Activated B cell treated with CpG ODN at 0.5 μM for 24 hours (primary cell): ENCODE measurements at regions of chr3 and their contacts with region 1.

Region 1: DNA sequence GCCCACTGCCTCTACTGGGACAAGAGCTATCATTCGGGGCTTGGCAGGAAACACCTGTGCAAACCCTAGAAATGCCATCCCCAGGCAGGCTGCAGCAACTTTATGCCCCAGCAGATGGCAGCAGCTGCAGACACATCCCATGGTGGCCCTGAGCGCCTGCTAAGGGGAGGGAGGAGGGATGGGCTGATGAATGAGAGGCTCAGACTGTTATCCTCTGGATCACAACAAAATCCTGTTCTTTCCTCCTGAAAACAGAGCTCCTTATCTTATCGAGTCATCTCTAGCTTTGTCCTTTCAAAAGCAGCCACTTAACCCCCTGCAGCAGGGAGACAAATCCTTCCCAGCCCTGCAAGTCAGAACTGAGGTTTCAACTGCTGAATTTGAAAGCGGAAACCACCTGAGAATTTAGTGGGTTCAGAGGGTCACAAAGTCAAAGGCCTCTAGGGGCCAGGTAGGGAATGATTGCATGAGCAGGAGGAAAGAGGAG is 90.6 kb upstream of the PROK2 start:
- DNase-seq: peak; percentile 70
- ATAC-seq: peak; percentile 99
- H3K4me3 Mint-ChIP-seq: no peak overlapping the region
- H3K27ac Mint-ChIP-seq: no peak overlapping the region
- H3K4me1 Mint-ChIP-seq: peaks cover 13% of the 10 kb centered on the region
- H3K27me3 Mint-ChIP-seq: peaks cover 31% of the 10 kb centered on the region
- CTCF ChIP-seq: no peak

Region 2: GRCh38 chr3:70916375-70917065 is 959.0 kb before region 1 on chr3:
- CTCF ChIA-PET with region 1: no interaction called
- POLR2A ChIA-PET with region 1: no interaction called
- intact Hi-C with region 1: no loop called
- DNase-seq: no peak
- ATAC-seq: no peak
- H3K4me3 Mint-ChIP-seq: no peak overlapping the region
- H3K27ac Mint-ChIP-seq: no peak overlapping the region
- H3K4me1 Mint-ChIP-seq: no peaks in the 10 kb centered on the region
- H3K27me3 Mint-ChIP-seq: peaks cover 12% of the 10 kb centered on the region
- CTCF ChIP-seq: no peak

Region 3: GRCh38 chr3:71905426-71905825 is 29.9 kb after region 1 on chr3:
- CTCF ChIA-PET with region 1: no interaction called
- POLR2A ChIA-PET with region 1: no interaction called
- intact Hi-C with region 1: loop called (anchors 2 kb)
- DNase-seq: no peak
- ATAC-seq: peak; percentile 90
- H3K4me3 Mint-ChIP-seq: peak overlapping the region; percentile 52
- H3K27ac Mint-ChIP-seq: no peak overlapping the region
- H3K4me1 Mint-ChIP-seq: peaks cover 42% of the 10 kb centered on the region
- H3K27me3 Mint-ChIP-seq: peaks cover 73% of the 10 kb centered on the region
- CTCF ChIP-seq: no peak

Region 4: DNA sequence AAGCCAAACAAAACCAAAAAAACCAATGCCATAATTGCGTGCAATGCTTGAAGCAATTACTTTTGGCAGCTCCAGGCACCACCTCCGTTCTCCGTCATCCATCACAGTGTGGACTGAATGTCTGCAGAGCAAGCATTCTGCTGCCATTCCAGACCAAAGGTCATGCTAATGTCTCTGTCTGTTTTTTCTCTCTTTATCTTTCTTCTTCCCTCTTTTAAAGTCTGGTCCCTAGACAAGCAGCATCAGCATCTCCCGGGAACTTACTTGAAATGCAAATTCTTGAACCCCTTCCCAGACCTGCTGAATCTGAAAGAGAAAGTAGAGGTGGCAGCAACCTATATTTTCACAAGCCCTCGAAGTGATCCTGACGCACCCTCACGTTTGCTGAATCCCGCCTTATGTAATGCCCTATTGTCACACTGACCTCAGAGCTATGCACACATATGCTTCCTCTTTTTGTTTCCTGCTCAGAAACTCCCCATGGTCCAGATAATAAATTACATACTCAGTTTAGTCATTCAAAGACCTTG is 206.7 kb after region 1 on chr3:
- CTCF ChIA-PET with region 1: interaction called, 4 read pairs
- POLR2A ChIA-PET with region 1: no interaction called
- intact Hi-C with region 1: loop called (anchors 1 kb)
- DNase-seq: no peak
- ATAC-seq: peak; percentile 81
- H3K4me3 Mint-ChIP-seq: peak overlapping the region; percentile 72
- H3K27ac Mint-ChIP-seq: peak overlapping the region; percentile 71
- H3K4me1 Mint-ChIP-seq: peaks cover 71% of the 10 kb centered on the region
- H3K27me3 Mint-ChIP-seq: peaks cover 12% of the 10 kb centered on the region
- CTCF ChIP-seq: no peak

Region 5: DNA sequence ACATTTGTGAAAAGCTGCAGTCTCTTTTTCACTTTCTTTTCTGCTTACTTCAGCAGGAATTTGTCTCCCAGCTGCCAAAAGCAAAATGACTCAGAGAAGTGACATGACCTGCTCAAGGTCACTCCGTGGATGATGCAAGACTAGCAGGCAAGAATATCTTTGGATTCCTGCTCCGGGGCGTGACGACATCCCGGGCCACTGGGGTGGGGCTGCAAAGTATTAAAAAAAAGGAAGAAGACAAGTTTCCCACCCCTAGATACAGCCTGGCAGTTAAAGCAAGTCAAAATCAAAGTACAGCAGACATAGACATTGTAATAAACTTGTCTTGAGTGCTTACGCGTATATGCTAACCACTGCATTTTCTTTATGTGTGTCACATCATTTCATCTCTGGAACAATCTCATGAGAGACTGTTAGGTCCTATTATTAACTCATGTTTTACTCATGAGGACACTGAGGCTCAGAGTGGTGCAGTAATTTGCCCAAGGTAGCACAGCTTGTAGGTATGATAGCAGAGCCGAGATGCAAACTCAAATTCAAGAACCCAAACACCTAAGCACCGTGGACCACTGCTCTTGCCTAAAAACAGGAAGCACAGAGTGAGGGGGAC is 394.7 kb after region 1 on chr3:
- CTCF ChIA-PET with region 1: no interaction called
- POLR2A ChIA-PET with region 1: no interaction called
- intact Hi-C with region 1: loop called (anchors 10 kb)
- DNase-seq: no peak
- ATAC-seq: no peak
- H3K4me3 Mint-ChIP-seq: peak overlapping the region; percentile 38
- H3K27ac Mint-ChIP-seq: no peak overlapping the region
- H3K4me1 Mint-ChIP-seq: peaks cover 94% of the 10 kb centered on the region
- H3K27me3 Mint-ChIP-seq: no peaks in the 10 kb centered on the region
- CTCF ChIP-seq: no peak

Region 6: GRCh38 chr3:72818092-72818773 is 942.7 kb after region 1 on chr3:
- CTCF ChIA-PET with region 1: interaction called, 113 read pairs
- POLR2A ChIA-PET with region 1: interaction called, 3 read pairs
- intact Hi-C with region 1: loop called (anchors 1 kb)
- DNase-seq: no peak
- ATAC-seq: no peak
- H3K4me3 Mint-ChIP-seq: no peak overlapping the region
- H3K27ac Mint-ChIP-seq: no peak overlapping the region
- H3K4me1 Mint-ChIP-seq: peaks cover 23% of the 10 kb centered on the region
- H3K27me3 Mint-ChIP-seq: no peaks in the 10 kb centered on the region
- CTCF ChIP-seq: no peak

Region 7: DNA sequence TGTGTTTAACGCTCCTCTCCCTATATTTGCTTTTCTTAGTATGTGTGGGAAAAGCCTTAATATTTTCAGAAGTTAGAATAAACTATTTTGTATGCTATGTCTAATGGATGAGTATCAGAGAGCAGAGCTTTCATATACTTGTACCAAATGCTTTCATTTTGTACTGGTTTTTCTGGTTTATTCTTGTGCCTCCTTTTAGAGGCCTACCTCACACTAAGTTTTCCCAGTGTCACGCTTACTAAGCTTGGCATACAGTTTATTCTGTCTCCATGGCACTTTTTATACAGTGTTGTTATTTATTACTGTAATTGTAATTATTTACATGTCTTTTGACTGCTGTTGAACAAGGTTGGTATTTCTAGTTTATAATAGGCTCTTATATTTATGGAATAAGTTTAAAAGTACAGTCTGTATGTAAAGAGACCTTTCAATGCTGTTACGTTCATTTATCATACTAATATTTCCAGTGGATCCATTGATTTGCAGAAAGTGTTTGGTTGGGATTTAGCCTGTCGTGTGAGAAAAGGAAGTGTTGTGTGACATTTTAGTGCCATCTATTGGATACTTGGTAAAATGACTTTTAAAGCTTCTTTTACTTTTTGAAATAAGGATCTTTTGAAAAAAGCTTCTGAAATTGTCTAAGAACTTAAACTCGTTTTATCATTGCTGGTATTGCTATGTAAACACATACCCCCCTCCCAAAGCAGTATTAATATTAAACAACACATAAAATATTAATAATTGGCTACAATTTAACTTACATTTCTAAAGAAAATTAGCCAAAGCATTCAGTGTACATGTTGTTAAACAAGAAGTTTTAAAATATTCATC is 1180.7 kb after region 1 on chr3:
- CTCF ChIA-PET with region 1: no interaction called
- POLR2A ChIA-PET with region 1: no interaction called
- intact Hi-C with region 1: loop called (anchors 2 kb)
- DNase-seq: no peak
- ATAC-seq: no peak
- H3K4me3 Mint-ChIP-seq: no peak overlapping the region
- H3K27ac Mint-ChIP-seq: no peak overlapping the region
- H3K4me1 Mint-ChIP-seq: peaks cover 3% of the 10 kb centered on the region
- H3K27me3 Mint-ChIP-seq: no peaks in the 10 kb centered on the region
- CTCF ChIP-seq: no peak